ENCODE measurements at regions of chr17 and their contacts with region 1.

Region 1: GRCh38 chr17:33292184-33292980 is 713 bp downstream of the ASIC2 start:
- DNase-seq: peak in 1 of 2 experiments; percentile 33
- H3K4me3 ChIP-seq: no peak overlapping the region
- H3K27ac ChIP-seq: no peak overlapping the region
- H3K4me1 ChIP-seq: no peaks in the 10 kb centered on the region
- H3K27me3 ChIP-seq: no peaks in the 10 kb centered on the region; the same call in 1 of the 2 replicates
- CTCF ChIP-seq: no peak

Region 2: GRCh38 chr17:33049781-33050414 is 242.5 kb before region 1 on chr17:
- CTCF ChIA-PET with region 1: no interaction called
- POLR2A ChIA-PET with region 1: no interaction called
- intact Hi-C with region 1: loop called (anchors 10 kb)
- DNase-seq: peak in 1 of 2 experiments; percentile 29
- H3K4me3 ChIP-seq: no peak overlapping the region
- H3K27ac ChIP-seq: no peak overlapping the region
- H3K4me1 ChIP-seq: no peaks in the 10 kb centered on the region
- H3K27me3 ChIP-seq: peaks cover 48% of the 10 kb centered on the region
- CTCF ChIP-seq: peak; percentile 88

Measured in PC-9 (cell line).